Left colon (tissue), 2 donors: ENCODE measurements at regions of chr9 and their contacts with region 1.

Region 1: GRCh38 chr9:28317745-28318144 is 744.5 kb upstream of the C9orf72 start:
- DNase-seq: no peak
- ATAC-seq: no peak

Region 2: DNA sequence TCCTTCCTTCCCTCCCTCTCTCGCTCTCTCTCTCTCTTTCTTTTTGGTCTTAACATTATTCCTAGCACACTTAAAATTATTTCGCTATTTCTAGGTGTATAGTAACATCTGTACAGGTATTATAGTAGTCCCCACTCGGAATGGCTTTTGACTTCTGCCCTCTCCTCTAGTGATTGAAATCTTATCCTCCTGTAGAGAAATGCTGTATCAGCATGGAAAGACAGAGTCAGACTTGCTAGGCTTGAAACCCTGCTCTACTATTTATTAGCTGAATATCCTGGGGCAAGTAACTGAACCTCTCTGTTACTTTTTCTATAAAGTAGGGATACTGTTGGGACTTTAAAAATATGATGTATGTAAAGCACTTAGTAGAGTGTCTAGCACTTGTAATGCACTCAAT is 62.6 kb before region 1 on chr9:
- intact Hi-C with region 1: loop called in 1 of 2 experiments (anchors 10 kb)
- DNase-seq: no peak
- ATAC-seq: no peak